ENCODE measurements at regions of chr19 and their contacts with region 1.

Region 1: DNA sequence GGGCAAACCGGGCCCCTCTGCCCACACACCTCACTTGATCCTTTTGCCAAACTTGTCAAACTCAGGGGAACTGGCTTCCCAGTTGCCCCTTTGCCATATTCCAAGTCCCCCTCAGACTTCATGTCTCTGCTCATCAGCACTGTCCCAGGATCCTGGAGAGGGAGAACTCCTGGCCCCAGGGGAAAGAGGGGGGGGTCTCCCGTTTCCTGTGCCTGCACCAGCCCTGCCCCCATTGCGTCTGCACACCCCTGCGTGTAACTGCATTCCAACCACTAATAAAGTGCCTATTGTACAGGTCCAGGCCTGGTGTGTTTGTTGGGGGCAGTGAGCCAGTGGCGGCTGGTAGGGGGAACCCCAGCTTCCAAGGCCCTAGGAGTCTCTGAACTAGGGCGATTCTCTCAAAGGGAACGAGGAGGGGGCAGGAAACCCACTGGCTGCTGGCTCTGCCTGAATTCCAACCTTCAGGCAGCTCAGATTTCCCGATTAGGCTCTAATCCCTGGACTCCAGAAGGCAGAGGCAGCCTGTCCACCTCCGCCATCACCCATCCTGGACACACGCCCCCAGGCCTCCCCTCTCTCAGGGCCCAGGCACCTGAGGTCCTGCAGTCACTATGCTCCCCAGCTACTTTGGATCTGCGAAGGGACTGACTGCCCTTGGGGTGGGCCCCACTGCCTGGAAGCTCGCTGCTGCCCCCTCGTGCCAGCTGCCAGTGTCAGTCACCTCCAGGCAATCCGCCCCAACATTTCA is 9.7 kb upstream of the ILF3 start:
- DNase-seq: peak; percentile 88
- H3K4me3 ChIP-seq: no peak overlapping the region
- H3K27ac ChIP-seq: no peak overlapping the region
- H3K4me1 ChIP-seq: no peaks in the 10 kb centered on the region
- H3K27me3 ChIP-seq: no peaks in the 10 kb centered on the region

Region 2: DNA sequence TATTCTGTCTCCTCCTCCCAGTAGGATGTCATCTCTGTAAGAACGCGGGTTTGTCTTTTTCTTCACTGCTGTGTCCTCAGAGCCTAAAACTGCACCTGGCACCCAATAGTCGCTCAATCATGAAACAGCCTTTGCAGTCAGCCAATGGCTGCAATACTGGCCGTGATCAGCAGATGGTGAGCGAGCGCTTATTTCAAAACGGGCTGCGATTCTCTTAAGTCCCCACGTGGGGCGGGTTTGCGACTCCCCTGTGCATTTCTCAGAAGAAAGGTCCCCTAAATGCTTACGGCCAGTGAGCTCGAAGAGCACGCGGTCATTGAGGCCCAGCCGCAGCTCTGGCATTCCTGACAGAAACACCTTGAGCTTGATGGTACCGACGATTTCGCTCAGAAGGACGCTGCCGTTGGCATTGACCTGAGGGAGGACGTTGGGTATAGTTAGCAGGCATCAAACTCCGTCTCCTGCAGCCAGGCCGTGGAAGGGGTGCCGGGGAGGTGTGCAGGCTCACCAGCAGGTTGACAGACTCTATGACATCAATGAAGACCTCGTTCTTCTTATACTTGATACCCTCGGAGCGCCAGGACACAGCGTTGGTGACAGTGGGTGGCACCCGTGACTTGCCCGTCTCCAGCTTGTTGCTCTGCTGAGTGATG is 63.3 kb before region 1 on chr19:
- in situ Hi-C with region 1: loop called (anchors 5 kb)
- DNase-seq: peak; percentile 98
- H3K4me3 ChIP-seq: peak overlapping the region; percentile 51; the same call in 1 of the 2 replicates
- H3K27ac ChIP-seq: no peak overlapping the region
- H3K4me1 ChIP-seq: peaks cover 3% of the 10 kb centered on the region; the same call in 1 of the 2 replicates
- H3K27me3 ChIP-seq: no peaks in the 10 kb centered on the region